ENCODE measurements at regions of chr15 and their contacts with region 1.

Region 1: GRCh38 chr15:75126001-75126400 is 75.7 kb upstream of the C15orf39 start:
- DNase-seq: no peak
- H3K4me3 ChIP-seq: no peak overlapping the region
- CTCF ChIP-seq: no peak

Region 2: DNA sequence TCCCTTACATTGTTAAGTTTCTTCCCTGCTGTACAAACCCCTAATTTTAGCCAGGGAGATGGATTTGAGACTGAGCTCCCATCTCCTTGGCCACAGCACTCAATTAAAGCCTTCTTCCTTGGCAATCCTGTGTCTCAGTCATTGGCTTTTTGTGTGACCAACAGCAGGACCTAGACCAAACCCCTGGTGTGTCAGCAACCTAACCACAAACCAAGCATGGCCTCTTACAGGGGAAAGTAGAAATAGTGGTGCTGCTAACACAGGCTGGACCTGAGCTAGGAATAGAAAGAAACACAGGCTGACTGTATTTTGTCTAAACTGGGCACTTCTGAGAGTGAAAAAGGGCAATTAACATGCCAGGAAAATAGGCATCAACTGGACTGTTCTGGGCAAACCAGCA is 64.7 kb before region 1 on chr15:
- in situ Hi-C with region 1: loop called (anchors 5 kb)
- DNase-seq: peak; percentile 48
- H3K4me3 ChIP-seq: no peak overlapping the region
- CTCF ChIP-seq: no peak

Region 3: DNA sequence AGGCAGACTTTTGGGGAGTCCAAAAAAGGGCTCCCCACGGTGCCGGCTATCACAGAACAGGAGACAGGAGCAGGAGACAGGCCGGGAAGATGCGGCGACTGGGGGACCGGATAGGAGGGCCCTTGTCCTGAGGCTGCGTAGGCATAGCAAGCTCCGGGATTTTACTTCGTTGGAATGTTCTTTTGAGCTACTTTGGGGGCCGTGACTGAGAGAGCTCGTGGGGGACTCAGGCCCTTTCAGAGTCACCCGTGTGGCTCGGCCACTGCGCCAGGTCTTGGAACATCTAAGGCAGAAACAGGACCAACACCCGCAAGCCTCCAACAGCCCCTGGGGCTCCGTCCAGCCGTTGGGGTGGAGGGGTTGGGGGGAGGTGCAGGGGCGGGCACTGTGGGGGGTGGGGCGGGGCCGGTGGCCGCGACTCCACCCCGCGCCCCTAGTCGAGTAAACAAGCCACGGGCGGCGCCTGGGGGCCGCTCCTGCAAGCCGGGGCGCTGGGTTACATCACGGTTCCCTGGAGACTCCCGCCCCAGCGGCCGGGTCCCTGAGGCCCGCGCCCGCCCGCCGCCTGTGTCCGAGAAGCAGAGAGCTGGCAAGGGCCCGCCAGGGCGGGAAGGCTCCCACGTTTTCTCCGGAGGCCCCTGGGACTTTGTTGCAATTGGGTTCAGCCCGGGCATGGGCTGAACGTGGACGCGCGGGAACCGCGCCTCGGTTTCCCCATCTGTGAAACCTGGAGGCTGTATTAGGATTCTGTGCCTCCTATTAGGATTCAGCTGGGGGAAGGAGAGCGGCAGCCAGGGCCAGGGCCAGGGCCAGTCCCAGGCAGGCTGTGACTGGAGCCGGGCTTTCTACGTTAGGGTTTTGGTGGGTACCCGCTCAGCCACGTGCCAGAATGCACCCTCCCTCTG is 52.4 kb after region 1 on chr15:
- in situ Hi-C with region 1: no loop called
- DNase-seq: no peak
- H3K4me3 ChIP-seq: peak overlapping the region; percentile 22
- CTCF ChIP-seq: no peak

Region 4: GRCh38 chr15:75195122-75195765 is 69.2 kb after region 1 on chr15:
- in situ Hi-C with region 1: no loop called
- DNase-seq: no peak
- H3K4me3 ChIP-seq: no peak overlapping the region
- CTCF ChIP-seq: no peak

Region 5: DNA sequence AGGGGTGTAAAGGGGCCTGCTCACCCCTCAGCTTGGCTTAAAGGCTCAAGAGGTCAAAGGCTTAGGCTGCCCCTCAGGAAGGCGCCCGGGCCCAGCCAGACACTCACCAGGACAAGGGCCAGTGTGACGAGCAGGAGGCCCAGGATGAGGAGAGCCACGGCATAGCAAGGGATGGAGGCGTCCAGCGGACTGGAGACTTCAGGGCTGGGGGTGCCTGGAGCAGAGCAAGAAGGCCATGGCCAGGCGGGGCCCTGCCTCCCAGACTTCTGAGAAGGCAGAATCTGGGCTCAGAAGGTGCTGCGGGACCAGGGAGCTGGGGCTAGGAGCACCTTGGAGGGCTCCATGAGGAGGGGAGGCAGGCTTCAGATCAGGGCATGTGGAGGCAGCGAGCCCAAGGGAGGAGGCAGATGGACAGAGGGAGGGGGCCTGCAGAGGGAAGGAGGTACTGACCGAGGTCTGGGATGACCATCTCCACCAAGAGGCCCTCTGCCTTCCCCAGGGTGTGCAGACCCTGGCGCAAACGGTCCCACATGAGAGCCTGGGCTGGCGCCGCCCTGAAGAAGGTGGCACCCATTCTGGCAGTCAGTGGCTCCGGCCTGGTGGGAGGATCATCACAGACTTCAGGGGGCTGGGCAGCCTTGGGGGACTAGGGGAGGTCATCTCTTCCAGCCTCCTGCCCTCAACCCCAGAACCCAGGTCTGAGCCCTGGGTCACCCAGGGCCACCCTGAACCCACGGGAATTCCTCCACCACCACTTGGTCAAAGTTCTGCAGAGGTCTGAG is 100.1 kb after region 1 on chr15:
- in situ Hi-C with region 1: no loop called
- DNase-seq: no peak
- H3K4me3 ChIP-seq: no peak overlapping the region
- CTCF ChIP-seq: no peak

Measured in astrocyte of the cerebellum (primary cell).